Sciatic nerve (tissue), 2 donors: ENCODE measurements at regions of chr16 and their contacts with region 1.

Region 1: DNA sequence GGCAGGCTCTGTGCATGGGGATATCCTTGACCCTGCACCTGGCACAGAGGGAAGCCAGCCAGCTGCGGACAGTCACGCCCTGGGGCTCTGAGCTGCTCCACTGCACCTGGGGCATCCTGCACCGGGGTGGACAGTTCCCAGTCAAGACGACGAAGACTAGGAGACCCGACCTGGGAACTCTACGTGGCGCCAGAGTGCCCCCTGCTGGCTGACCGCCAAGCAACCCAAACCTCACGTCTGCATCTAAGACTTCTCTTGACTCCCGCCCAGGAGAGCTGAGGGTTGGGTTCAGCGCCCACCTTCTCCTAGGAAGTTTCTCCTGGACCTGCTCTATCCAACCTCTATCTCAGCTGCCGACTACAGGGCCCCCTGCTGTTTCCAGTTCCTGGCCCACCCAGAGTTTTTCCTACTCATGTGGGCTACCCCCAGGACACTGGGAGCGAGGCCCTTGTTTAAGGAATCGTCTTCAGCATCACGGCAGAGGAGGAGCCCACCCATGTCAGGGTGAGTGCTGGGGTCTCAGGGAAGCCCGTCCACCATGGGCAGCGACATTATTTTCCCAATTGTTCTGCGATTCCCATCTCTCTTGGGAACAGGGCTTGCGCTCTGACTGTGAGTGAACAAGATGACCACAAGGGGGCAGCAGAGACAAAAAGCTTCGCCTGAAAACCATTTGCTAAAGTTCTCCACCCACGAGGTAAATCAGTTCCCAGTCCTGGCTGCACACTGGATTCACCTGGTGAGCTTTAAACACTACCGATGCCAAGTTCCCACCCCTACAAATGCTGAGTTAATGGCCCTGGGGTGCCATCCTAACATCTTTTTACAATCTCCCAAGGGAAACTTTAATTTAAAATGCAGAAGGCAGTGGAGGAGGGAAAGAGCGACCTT is 29.3 kb downstream of the TLE7 start:
- DNase-seq: peak; percentile 77
- ATAC-seq: peak; percentile 73

Region 2: GRCh38 chr16:71474864-71475263 is 62.3 kb after region 1 on chr16:
- intact Hi-C with region 1: no loop called
- DNase-seq: no peak
- ATAC-seq: no peak

Region 3: DNA sequence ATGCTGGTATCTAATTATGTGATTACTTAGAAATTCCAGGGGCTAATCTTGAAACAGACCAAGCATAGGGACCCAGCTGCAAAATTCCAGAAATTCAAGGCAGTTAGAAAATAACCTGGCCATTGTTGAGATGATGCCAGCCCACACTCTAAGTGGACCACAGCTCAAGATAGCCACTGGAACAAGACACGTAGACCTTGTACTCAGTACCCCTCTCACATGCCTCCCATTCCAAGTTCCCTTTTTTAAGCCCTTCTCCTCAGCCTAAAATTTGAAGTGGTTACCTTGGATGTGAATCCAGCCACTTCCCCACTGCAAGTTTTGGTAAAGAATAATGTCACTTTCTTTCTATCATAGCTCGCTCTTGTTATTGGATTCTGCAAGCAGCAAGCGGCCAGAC is 80.7 kb after region 1 on chr16:
- intact Hi-C with region 1: loop called (anchors 2 kb)
- DNase-seq: no peak
- ATAC-seq: no peak

Region 4: DNA sequence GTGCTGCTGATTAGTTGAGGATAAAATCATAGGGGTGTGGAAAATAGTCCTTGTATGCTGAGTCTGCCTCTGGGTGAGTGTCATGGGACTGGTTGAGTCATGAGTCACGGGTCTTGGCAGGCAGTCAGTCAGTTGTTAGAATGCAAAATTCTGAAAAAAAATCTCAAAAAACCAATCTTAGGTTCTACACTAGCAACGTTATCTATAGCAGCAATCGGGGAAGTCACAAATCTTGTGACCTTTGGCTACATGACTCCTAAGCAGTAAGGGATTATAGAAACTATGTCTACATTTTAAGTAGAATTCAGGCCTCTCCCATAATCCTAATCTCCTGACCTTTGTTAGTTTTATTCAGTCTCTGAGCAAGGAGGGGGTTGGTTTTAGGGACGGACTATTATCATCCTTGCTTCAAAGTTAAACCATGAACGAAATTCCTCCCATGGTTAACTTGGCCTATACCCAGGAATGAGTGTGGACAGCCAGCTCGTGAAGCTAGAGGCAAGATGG is 777.4 kb after region 1 on chr16:
- intact Hi-C with region 1: no loop called
- DNase-seq: no peak
- ATAC-seq: peak; percentile 82